Aorta (tissue), 5 donors: ENCODE measurements at regions of chr10 and their contacts with region 1.

Region 1: DNA sequence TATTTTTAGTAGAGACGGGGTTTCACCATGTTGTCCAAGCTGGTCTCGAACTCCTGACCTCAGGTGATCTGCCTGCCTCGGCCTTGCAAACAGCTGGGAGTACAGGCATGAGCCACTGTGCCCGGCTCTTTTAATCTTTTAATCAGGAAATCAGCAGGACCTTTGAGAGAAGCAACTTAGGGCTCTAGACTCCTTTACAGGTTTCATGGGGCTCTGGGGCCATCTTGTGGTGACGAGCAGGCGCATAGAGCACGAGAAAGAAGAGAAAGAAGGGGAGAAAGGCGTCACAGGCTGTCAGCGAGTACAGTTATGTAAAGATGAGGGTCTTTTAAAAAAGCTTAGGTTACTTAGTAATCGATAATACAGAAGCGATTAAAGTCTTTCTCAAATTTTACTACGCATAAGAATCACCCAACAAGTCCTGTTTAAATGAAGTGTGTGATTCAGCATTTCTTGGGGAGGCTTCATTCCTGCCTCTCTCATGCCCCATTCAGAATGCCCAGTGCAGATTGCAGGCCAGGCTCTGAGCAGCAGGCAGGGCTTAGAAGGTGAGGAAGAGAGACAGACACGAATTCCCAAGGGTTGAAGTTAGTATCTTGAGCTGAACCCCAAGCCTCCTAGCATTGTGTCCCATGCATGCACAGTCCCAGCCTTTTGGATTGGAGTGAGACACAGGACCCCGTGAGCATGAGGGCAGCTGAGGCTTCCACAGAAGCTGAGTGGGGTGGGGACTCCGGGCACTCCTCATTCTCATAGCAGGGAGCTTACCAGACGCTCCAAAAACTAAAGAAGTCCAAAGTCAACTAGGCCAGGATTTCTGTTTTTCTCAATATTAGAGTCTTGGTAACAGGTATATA is 23.6 kb upstream of the PFKP start:
- DNase-seq: peak; percentile 80 to 81
- ATAC-seq: peak; percentile 71
- H3K4me3 ChIP-seq: no peak overlapping the region
- H3K27ac ChIP-seq: peak overlapping the region in 1 of 2 donors; percentile 79
- H3K4me1 ChIP-seq: peaks cover 0 to 4% of the 10 kb centered on the region in 2 donors
- H3K27me3 ChIP-seq: no peaks in the 10 kb centered on the region

Region 2: DNA sequence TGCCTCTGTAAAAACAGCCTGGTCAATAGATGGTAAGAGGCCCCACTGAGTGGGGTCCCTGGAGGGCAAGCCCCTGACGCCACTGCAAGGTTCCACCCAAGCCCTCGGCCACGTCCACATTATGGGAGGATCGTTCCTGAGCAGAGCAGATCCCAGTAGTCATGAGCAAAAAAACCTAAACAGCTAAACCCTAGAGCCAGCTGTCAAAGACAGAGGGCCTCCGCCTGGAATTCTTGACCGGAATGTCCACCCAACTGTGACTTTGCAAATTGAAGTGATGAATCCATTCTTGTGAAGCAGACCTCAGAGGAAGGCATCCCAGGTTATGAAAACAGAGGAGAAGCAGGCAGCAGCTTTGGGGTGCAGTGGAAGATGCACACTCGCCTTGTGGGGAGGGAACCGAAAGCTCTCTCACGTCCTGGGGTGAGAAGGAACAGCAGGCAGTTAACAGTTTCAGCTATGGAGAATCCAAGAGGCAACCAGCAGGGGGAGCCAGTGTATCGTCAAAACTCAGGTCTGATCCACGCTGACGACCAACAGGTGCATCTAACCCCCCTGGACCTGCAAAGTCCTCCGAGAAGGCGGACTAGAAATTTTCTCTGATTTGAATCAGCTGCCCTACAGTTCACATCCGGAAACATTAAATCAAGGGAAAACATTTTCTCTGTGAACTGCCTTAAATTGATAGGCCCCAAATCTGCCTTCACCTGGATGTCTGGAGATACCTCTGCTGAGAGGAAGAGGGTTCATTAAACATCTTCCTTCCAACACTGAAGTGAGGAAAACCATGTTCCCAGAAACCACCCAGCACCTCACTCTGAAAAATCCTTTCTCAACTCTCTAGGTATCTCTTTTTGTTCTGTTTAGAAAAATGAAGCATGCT is 115.5 kb before region 1 on chr10:
- intact Hi-C with region 1: loop called (anchors 5 to 10 kb)
- DNase-seq: peak in 1 of 2 donors; percentile 72
- ATAC-seq: no peak
- H3K4me3 ChIP-seq: no peak overlapping the region
- H3K27ac ChIP-seq: no peak overlapping the region
- H3K4me1 ChIP-seq: no peaks in the 10 kb centered on the region
- H3K27me3 ChIP-seq: peaks cover 0 to 3% of the 10 kb centered on the region in 2 donors

Region 3: DNA sequence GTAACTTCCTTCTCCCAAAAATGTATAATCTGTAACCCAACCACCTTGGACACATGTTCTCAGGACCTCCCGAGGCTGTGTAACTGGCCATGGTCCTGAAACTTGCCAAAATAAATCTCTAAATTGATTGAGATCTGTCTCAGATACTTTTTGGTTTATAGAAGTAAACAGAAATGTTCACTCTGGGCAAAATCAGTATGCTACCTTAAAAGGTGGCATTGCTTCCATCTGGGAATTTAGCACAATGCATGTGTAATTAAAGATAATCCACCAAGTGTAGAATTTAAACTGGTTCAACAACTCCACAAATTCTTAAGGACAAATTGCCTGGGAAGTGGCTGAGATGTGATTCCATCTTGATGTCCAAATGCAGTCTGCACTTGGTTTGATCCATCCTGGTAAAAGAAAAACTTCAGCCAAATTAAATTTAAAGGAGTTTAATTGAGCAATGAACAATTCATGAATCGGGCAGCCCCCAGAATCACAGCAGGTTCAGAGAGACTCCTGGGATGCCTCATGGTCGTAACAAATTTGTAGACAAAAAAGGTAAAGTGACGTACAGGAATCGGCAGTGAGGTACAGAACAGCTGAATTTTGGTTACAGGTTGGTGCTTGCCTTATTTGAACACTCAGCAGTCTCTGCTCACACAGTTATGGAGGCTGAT is 79.0 kb before region 1 on chr10:
- intact Hi-C with region 1: no loop called
- DNase-seq: no peak
- ATAC-seq: no peak
- H3K4me3 ChIP-seq: no peak overlapping the region
- H3K27ac ChIP-seq: no peak overlapping the region
- H3K4me1 ChIP-seq: no peaks in the 10 kb centered on the region
- H3K27me3 ChIP-seq: peaks cover 0 to 4% of the 10 kb centered on the region in 2 donors

Region 4: GRCh38 chr10:3095373-3096139 is 51.8 kb after region 1 on chr10:
- intact Hi-C with region 1: loop called in 1 of 2 experiments (anchors 5 kb)
- DNase-seq: no peak
- ATAC-seq: peak; percentile 87
- H3K4me3 ChIP-seq: no peak overlapping the region
- H3K27ac ChIP-seq: peak overlapping the region; percentile 46 to 94
- H3K4me1 ChIP-seq: peaks cover 2 to 3% of the 10 kb centered on the region in 2 donors
- H3K27me3 ChIP-seq: no peaks in the 10 kb centered on the region